AG04450 (cell line): ENCODE measurements at regions of chr10 and their contacts with region 1.

Region 1: DNA sequence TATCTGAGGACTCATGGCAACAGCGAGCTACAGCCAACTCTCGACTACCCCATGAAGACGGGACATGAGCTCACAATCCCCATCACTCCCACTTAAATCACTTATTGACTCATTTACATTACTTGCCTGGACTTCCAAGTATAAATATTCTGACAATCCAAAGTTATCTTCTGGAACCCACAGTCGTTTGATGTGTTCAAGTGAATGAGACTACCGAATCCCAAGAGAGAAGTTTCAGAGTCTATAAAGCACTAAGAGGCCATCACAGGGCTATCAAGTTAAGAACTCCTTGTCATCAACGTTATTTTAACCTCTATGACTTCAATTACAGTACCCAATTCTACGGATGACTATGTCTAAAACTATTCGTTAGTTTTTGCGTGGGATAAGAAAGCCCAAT is 11.5 kb upstream of the ANAPC16 start:
- DNase-seq: no peak
- H3K4me3 ChIP-seq: no peak overlapping the region
- H3K27ac ChIP-seq: no peak overlapping the region
- H3K27me3 ChIP-seq: no peaks in the 10 kb centered on the region
- CTCF ChIP-seq: no peak

Region 2: GRCh38 chr10:72079356-72079755 is 124.9 kb before region 1 on chr10:
- CTCF ChIA-PET with region 1: no interaction called
- POLR2A ChIA-PET with region 1: no interaction called
- DNase-seq: no peak
- H3K4me3 ChIP-seq: no peak overlapping the region
- H3K27ac ChIP-seq: no peak overlapping the region
- H3K27me3 ChIP-seq: peaks cover 33% of the 10 kb centered on the region
- CTCF ChIP-seq: no peak

Region 3: DNA sequence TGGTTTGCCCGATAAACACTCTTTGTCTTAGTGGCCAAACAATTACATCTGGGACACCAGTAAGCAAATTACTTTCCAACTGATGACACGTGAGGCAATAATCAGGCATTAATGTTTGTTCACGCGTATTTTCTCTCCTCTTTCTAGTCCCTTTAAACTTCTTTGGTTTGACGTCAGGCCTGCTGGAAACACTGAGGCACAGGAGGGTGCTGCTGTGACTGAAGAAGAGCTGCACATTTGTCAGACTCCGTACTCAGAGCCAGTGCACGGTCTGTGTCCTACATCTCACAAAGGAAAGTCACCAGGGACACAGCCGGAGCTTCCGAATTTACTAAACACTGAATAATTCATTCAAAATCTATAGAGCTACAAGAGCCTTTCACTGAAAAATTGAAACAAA is 46.1 kb before region 1 on chr10:
- CTCF ChIA-PET with region 1: interaction called, 10 read pairs
- POLR2A ChIA-PET with region 1: no interaction called
- DNase-seq: no peak
- H3K4me3 ChIP-seq: no peak overlapping the region
- H3K27ac ChIP-seq: no peak overlapping the region
- H3K27me3 ChIP-seq: no peaks in the 10 kb centered on the region
- CTCF ChIP-seq: no peak